ENCODE measurements at regions of chr1 and their contacts with region 1.

Region 1: DNA sequence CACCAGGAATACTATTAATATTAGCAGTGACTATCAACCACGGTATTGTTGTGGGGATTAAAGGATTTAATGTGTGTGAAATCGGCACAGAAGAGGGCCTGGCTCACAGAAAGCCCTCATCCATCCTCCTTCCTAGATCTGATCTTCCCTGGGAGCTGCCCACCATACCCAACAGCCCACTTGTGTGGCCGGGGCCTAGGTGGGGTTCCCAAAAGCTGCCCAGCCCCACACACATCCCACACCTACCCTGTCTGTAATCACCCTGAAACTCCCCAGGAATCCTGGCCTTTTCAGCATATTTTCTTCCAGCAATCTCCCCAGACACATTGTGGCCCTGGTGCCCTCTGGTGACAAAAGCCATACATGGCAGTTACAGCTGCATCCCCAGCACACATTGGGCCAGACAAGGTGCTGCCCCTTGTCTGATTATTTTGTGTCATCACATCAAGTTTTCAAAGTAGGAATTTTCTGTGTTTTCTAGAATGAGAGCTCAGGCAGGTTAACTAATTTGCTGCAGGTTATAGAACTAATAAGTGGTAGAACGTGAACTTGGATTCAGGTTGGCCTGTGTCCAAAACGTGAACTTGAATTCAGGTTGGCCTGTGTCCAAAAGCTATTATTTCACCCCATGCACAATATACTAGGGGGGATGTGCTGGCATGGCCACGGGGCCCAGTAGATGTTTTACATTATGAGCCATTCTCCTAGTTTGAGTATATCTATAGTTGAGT is 5.3 kb upstream of the SLC6A9 start:
- DNase-seq: peak; percentile 88
- H3K4me3 Mint-ChIP-seq: no peak overlapping the region
- H3K27ac Mint-ChIP-seq: no peak overlapping the region
- H3K4me1 Mint-ChIP-seq: peaks cover 8% of the 10 kb centered on the region
- H3K27me3 Mint-ChIP-seq: no peaks in the 10 kb centered on the region

Region 2: DNA sequence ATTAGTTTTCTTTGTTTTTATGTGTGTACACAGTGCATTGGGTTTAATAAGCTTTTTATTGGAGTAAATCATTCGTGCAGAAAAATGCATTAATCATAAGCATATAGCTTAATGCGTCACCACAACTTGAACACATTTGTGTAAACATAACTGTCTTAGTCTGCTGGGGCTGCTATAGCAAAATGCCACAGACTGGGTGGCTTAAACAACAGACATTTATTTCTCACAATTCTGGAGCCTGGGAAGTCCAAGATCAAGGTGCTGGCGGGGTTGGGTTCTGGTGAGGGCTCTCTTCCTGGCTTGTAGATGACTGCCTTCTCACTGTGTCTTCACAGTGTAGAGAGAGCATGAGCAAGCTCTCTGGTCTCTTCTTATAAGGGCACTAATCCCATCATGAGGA is 12.2 kb after region 1 on chr1:
- CTCF ChIA-PET with region 1: interaction called, 61 read pairs
- intact Hi-C with region 1: no loop called
- DNase-seq: no peak
- H3K4me3 Mint-ChIP-seq: no peak overlapping the region
- H3K27ac Mint-ChIP-seq: peak overlapping the region; percentile 47
- H3K4me1 Mint-ChIP-seq: peaks cover 21% of the 10 kb centered on the region
- H3K27me3 Mint-ChIP-seq: peaks cover 11% of the 10 kb centered on the region

Measured in activated naive CD4-positive, alpha-beta T cell treated with anti-CD3 and anti-CD28 coated beads for 36 hours (primary cell).